Common myeloid progenitor, CD34-positive (primary cell): ENCODE measurements at regions of chr1 and their contacts with region 1.

Region 1: GRCh38 chr1:203475012-203475981 is at the start of gene PRELP:
- DNase-seq: no peak
- H3K4me3 ChIP-seq: no peak within 1 kb of the TSS
- H3K27ac ChIP-seq: no peak within 1 kb of the TSS
- H3K4me1 ChIP-seq: peaks cover 0 to 3% (median under 1%) of the 10 kb centered on the region in 4 experiments
- H3K27me3 ChIP-seq: peaks cover 0 to 6% (median 0%) of the 10 kb centered on the region in 5 experiments

Region 2: GRCh38 chr1:203486618-203487370 is 11.5 kb after region 1 on chr1:
- CTCF ChIA-PET with region 1: interaction called, 22 read pairs
- POLR2A ChIA-PET with region 1: no interaction called
- DNase-seq: no peak
- H3K4me3 ChIP-seq: peak overlapping the region in 1 of 7 experiments; percentile 61
- H3K27ac ChIP-seq: no peak overlapping the region
- H3K4me1 ChIP-seq: peaks cover 0 to 9% (median 4%) of the 10 kb centered on the region in 4 experiments
- H3K27me3 ChIP-seq: no peaks in the 10 kb centered on the region